B cell (primary cell): ENCODE measurements at regions of chr12 and their contacts with region 1.

Region 1: DNA sequence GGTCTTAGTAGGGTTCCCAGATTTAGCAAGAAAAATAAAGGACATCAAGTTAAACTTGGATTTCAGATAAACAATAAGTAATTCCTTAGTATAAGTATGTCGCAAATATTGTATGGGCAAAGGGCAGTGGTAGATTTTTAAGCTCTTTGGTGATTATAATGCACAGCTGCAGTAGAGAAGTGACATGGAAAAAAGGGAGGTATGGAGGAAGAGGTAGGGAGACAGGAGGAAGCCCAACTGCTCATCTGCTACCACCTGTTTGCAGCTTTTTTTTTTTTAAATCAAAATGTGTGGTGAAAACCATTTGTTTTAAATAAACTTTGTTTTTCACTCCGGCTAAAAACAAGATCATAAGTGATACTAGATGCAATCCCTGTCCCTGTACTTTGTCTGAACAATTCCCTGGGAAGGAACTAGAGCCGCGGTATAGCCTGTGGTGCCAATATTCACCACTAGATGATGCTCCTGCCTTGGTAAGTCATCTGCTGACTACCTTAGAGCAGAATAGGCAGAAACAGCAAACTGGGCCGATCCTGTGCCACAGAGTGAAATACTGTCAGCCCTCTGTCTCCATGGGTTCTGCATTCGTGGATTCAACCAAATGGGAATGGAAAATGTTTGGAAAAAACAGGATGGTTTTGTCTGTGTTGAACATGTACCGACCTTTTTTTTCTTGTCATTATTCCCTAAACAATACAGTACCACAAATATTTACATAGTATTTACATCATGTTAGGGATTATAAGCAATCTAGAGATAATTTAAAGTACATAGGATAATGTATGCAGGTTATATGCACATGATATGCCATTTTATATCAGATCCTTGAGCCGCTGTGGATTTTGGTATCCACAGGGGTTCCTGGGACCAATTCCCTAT is 62.4 kb upstream of the PLBD1 start:
- DNase-seq: peak; percentile 77
- ATAC-seq: peak; percentile 100
- H3K4me3 ChIP-seq: no peak overlapping the region
- H3K4me3 Mint-ChIP-seq: no peak overlapping the region
- H3K27ac ChIP-seq: no peak overlapping the region
- H3K27ac Mint-ChIP-seq: no peak overlapping the region
- H3K4me1 ChIP-seq: no peaks in the 10 kb centered on the region
- H3K4me1 Mint-ChIP-seq: no peaks in the 10 kb centered on the region
- H3K27me3 ChIP-seq: no peaks in the 10 kb centered on the region
- H3K27me3 Mint-ChIP-seq: no peaks in the 10 kb centered on the region
- CTCF ChIP-seq: peak; percentile 98

Region 2: GRCh38 chr12:14514154-14514842 is 115.8 kb before region 1 on chr12:
- CTCF ChIA-PET with region 1: interaction called, 13 read pairs
- POLR2A ChIA-PET with region 1: no interaction called
- intact Hi-C with region 1: no loop called
- DNase-seq: peak; percentile 47
- ATAC-seq: peak; percentile 57
- H3K4me3 ChIP-seq: no peak overlapping the region
- H3K4me3 Mint-ChIP-seq: no peak overlapping the region
- H3K27ac ChIP-seq: no peak overlapping the region
- H3K27ac Mint-ChIP-seq: no peak overlapping the region
- H3K4me1 ChIP-seq: no peaks in the 10 kb centered on the region
- H3K4me1 Mint-ChIP-seq: no peaks in the 10 kb centered on the region
- H3K27me3 ChIP-seq: no peaks in the 10 kb centered on the region
- H3K27me3 Mint-ChIP-seq: no peaks in the 10 kb centered on the region
- CTCF ChIP-seq: peak; percentile 53

Region 3: GRCh38 chr12:14618983-14619382 is 11.1 kb before region 1 on chr12:
- CTCF ChIA-PET with region 1: interaction called, 23 read pairs
- POLR2A ChIA-PET with region 1: no interaction called
- intact Hi-C with region 1: no loop called
- DNase-seq: peak; percentile 32
- ATAC-seq: no peak
- H3K4me3 ChIP-seq: no peak overlapping the region
- H3K4me3 Mint-ChIP-seq: no peak overlapping the region
- H3K27ac ChIP-seq: no peak overlapping the region
- H3K27ac Mint-ChIP-seq: peak overlapping the region; percentile 17
- H3K4me1 ChIP-seq: peaks cover 34 to 40% of the 10 kb centered on the region in 2 donors
- H3K4me1 Mint-ChIP-seq: peaks cover 42% of the 10 kb centered on the region
- H3K27me3 ChIP-seq: no peaks in the 10 kb centered on the region
- H3K27me3 Mint-ChIP-seq: no peaks in the 10 kb centered on the region
- CTCF ChIP-seq: peak; percentile 23

Region 4: DNA sequence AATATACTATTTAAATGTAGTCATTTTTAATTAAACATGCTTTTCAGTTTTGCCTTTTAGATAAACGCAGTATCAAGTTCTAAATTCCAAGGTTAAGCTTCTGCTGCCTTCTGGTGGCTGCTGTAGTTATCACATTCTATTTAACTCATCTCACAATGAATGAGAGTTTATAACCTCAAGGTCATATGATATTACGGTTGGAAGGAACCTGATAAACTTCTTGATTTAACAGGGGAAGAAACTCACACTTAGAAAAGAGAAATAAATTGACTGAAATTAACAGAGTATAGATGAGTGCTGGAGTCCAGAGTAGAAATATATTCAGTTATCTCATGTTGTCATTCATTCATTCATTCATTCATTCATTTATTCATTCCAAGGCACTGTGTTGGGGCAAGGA is 34.4 kb after region 1 on chr12:
- CTCF ChIA-PET with region 1: interaction called, 93 read pairs
- POLR2A ChIA-PET with region 1: no interaction called
- intact Hi-C with region 1: loop called (anchors 1 kb)
- DNase-seq: peak; percentile 77
- ATAC-seq: peak; percentile 80
- H3K4me3 ChIP-seq: no peak overlapping the region
- H3K4me3 Mint-ChIP-seq: no peak overlapping the region
- H3K27ac ChIP-seq: no peak overlapping the region
- H3K27ac Mint-ChIP-seq: no peak overlapping the region
- H3K4me1 ChIP-seq: no peaks in the 10 kb centered on the region
- H3K4me1 Mint-ChIP-seq: peaks cover 12% of the 10 kb centered on the region
- H3K27me3 ChIP-seq: no peaks in the 10 kb centered on the region
- H3K27me3 Mint-ChIP-seq: no peaks in the 10 kb centered on the region
- CTCF ChIP-seq: peak; percentile 82

Region 5: GRCh38 chr12:15220994-15221885 is 591.2 kb after region 1 on chr12 and contains the start of gene RERG:
- CTCF ChIA-PET with region 1: no interaction called
- POLR2A ChIA-PET with region 1: no interaction called
- intact Hi-C with region 1: loop called (anchors 5 kb)
- DNase-seq: peak; percentile 77
- ATAC-seq: peak; percentile 98
- H3K4me3 ChIP-seq: peak within 1 kb of the TSS in 4 of 5 experiments; percentile 29 to 49 (median 41)
- H3K4me3 Mint-ChIP-seq: peak within 1 kb of the TSS; percentile 79
- H3K27ac ChIP-seq: no peak within 1 kb of the TSS
- H3K27ac Mint-ChIP-seq: no peak within 1 kb of the TSS
- H3K4me1 ChIP-seq: peaks cover 11 to 16% of the 10 kb centered on the region in 2 donors
- H3K4me1 Mint-ChIP-seq: peaks cover 14% of the 10 kb centered on the region
- H3K27me3 ChIP-seq: peaks cover 0 to 39% (median 34%) of the 10 kb centered on the region in 4 experiments
- H3K27me3 Mint-ChIP-seq: peaks cover 44% of the 10 kb centered on the region
- CTCF ChIP-seq: peak; percentile 95
- total RNA-seq, gene RERG: not detected in 2 replicates